ENCODE measurements at regions of chr3 and their contacts with region 1.

Region 1: DNA sequence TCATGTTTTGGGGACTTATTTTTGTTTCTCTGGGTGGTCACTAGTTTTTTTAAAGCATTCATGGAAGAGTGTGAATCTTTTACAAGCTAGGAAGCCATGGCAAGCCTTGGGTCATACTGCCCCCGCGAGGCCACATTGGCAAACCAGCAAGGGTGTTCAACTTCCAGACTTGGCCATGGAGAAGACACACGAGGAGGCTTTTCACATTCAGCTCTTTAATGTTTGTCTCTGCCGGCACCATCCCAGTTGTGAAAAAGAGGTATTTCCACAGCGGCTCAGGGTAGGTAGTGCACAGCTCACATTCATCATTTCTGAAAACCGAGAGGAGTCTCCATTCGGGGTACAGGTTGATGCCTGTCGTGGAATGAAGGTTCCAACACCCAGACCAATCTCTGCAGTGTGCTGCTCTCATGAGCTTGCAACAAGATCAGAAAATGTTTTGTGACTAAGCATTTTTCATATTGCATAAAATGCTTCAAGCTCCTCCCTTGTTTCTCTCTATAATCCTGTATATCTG is 7.7 kb downstream of the CCR5 start:
- DNase-seq: peak; percentile 3
- H3K4me3 ChIP-seq: no peak overlapping the region
- H3K27ac ChIP-seq: no peak overlapping the region
- H3K4me1 ChIP-seq: no peaks in the 10 kb centered on the region
- H3K27me3 ChIP-seq: peaks cover 11% of the 10 kb centered on the region
- CTCF ChIP-seq: peak; percentile 34; the same call in 1 of the 2 replicates

Region 2: GRCh38 chr3:46143951-46144473 is 234.5 kb before region 1 on chr3:
- CTCF ChIA-PET with region 1: no interaction called
- POLR2A ChIA-PET with region 1: no interaction called
- intact Hi-C with region 1: no loop called
- DNase-seq: no peak
- H3K4me3 ChIP-seq: no peak overlapping the region
- H3K27ac ChIP-seq: no peak overlapping the region
- H3K4me1 ChIP-seq: no peaks in the 10 kb centered on the region
- H3K27me3 ChIP-seq: no peaks in the 10 kb centered on the region
- CTCF ChIP-seq: no peak

Region 3: GRCh38 chr3:46214751-46215352 is 163.6 kb before region 1 on chr3:
- CTCF ChIA-PET with region 1: no interaction called
- POLR2A ChIA-PET with region 1: no interaction called
- intact Hi-C with region 1: loop called (anchors 10 kb)
- DNase-seq: no peak
- H3K4me3 ChIP-seq: no peak overlapping the region
- H3K27ac ChIP-seq: no peak overlapping the region
- H3K4me1 ChIP-seq: no peaks in the 10 kb centered on the region
- H3K27me3 ChIP-seq: no peaks in the 10 kb centered on the region
- CTCF ChIP-seq: peak; percentile 31; the same call in 1 of the 2 replicates

Region 4: GRCh38 chr3:46812237-46812791 is 433.8 kb after region 1 on chr3:
- CTCF ChIA-PET with region 1: no interaction called
- POLR2A ChIA-PET with region 1: no interaction called
- intact Hi-C with region 1: no loop called
- DNase-seq: peak; percentile 44
- H3K4me3 ChIP-seq: no peak overlapping the region
- H3K27ac ChIP-seq: no peak overlapping the region
- H3K4me1 ChIP-seq: no peaks in the 10 kb centered on the region
- H3K27me3 ChIP-seq: no peaks in the 10 kb centered on the region
- CTCF ChIP-seq: no peak